ENCODE measurements at regions of chr16 and their contacts with region 1.

Region 1: DNA sequence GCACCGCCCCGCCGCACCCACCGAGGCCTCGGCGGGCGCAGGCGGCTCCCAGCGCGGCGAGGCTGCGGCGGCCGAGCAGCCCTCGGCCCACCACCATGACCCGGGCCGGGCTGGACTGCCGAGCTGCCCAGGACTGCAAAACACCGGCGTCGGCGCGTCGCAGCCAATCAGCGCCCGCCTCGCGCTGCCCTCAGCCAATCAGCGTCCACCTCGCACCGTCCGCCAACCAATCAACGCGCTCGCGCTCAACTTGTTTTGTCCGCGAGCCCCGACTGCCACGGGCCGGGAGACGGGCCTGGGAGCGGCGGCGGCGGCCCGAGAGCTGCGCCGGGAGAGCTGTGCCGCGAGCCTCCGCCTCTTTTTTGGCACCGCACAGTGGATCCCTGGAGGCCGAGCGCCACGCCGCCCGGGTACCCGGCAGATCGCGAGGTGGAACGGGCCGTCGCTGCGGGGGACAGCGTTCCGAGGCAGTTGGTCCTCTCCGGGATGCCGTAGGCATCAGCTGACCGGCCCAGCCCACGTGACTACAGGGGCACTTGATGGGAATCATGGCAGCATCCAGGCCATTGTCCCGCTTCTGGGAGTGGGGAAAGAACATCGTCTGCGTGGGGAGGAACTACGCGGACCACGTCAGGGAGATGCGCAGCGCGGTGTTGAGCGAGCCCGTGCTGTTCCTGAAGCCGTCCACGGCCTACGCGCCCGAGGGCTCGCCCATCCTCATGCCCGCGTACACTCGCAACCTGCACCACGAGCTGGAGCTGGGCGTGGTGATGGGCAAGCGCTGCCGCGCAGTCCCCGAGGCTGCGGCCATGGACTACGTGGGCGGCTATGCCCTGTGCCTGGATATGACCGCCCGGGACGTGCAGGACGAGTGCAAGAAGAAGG is at the starts of genes FAHD1 and HAGH:
- DNase-seq: peak; percentile 93
- ATAC-seq: peak; percentile 90
- H3K4me3 Mint-ChIP-seq: peak within 1 kb of the TSS; percentile 91
- H3K27ac Mint-ChIP-seq: peak within 1 kb of the TSS; percentile 89
- H3K4me1 Mint-ChIP-seq: peaks cover 27% of the 10 kb centered on the region
- H3K27me3 Mint-ChIP-seq: no peaks in the 10 kb centered on the region
- total RNA-seq, gene FAHD1: 11.6 to 11.9 TPM
- total RNA-seq, gene HAGH: 20.9 to 25.0 TPM

Region 2: GRCh38 chr16:1413684-1414531 is 413.0 kb before region 1 on chr16:
- CTCF ChIA-PET with region 1: no interaction called
- POLR2A ChIA-PET with region 1: no interaction called
- intact Hi-C with region 1: loop called in 1 of 2 experiments (anchors 2 kb)
- DNase-seq: peak; percentile 85
- ATAC-seq: peak; percentile 72
- H3K4me3 Mint-ChIP-seq: peak overlapping the region; percentile 81
- H3K27ac Mint-ChIP-seq: peak overlapping the region; percentile 81
- H3K4me1 Mint-ChIP-seq: peaks cover 24% of the 10 kb centered on the region
- H3K27me3 Mint-ChIP-seq: no peaks in the 10 kb centered on the region

Region 3: GRCh38 chr16:1677802-1678496 is 149.0 kb before region 1 on chr16 and contains the start of gene JPT2:
- CTCF ChIA-PET with region 1: no interaction called
- POLR2A ChIA-PET with region 1: no interaction called
- intact Hi-C with region 1: loop called in 1 of 2 experiments (anchors 1 kb)
- DNase-seq: peak; percentile 98
- ATAC-seq: peak; percentile 99
- H3K4me3 Mint-ChIP-seq: peak within 1 kb of the TSS; percentile 94
- H3K27ac Mint-ChIP-seq: peak within 1 kb of the TSS; percentile 89
- H3K4me1 Mint-ChIP-seq: peaks cover 26% of the 10 kb centered on the region
- H3K27me3 Mint-ChIP-seq: no peaks in the 10 kb centered on the region
- total RNA-seq, gene JPT2: 77.1 to 111 TPM

Region 4: GRCh38 chr16:1782352-1783091 is 44.4 kb before region 1 on chr16 and contains the starts of genes NUBP2 and SPSB3:
- CTCF ChIA-PET with region 1: no interaction called
- POLR2A ChIA-PET with region 1: interaction called, 6 read pairs
- intact Hi-C with region 1: loop called (anchors 1 to 5 kb)
- DNase-seq: peak; percentile 99
- ATAC-seq: peak; percentile 93
- H3K4me3 Mint-ChIP-seq: peak within 1 kb of the TSS; percentile 94
- H3K27ac Mint-ChIP-seq: peak within 1 kb of the TSS; percentile 85
- H3K4me1 Mint-ChIP-seq: peaks cover 26% of the 10 kb centered on the region
- H3K27me3 Mint-ChIP-seq: no peaks in the 10 kb centered on the region
- total RNA-seq, gene NUBP2: 34.4 to 42.4 TPM
- total RNA-seq, gene SPSB3: 12.5 to 13.6 TPM

Region 5: DNA sequence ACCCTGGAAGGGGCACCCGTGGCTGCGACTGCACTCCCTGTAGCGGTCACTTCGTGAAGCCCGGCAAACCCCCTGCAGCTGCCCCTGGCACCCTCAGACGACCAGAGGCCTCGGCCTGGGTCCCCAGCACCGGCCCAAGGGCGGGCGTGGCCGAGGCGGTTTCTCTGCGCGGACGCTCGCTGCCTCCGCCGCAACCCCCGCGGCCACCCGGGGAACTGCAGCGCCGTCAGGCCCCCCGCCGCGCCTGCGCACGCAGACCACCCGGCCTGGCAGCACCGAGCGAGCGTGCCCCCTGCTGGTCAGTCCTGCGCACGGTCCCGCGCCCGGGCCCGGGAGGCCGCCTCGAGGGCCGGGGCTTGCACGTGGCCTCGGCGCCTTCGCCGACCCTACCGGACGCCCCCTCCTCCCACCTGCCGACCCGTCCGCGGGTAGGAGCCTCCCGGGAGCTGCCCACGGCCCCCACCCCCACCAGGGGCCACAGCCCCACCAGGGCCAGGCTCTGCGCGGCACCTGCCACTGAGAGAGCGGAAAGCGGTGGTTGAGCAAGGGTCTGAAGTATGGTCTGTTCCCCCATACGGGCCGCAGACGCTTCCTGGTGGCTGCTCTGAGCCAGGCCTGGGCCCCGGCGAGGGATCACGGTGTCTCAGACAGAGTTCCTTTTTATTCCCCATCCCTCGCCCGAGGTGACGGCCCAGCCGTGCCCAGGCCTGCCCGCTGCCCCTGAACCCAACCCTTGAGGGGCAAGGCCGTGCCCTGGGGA is 102.8 kb after region 1 on chr16:
- CTCF ChIA-PET with region 1: no interaction called
- POLR2A ChIA-PET with region 1: no interaction called
- intact Hi-C with region 1: loop called in 1 of 2 experiments (anchors 1 kb)
- DNase-seq: peak; percentile 96
- ATAC-seq: peak; percentile 98
- H3K4me3 Mint-ChIP-seq: peak overlapping the region; percentile 47
- H3K27ac Mint-ChIP-seq: no peak overlapping the region
- H3K4me1 Mint-ChIP-seq: peaks cover 2% of the 10 kb centered on the region
- H3K27me3 Mint-ChIP-seq: peaks cover under 1% of the 10 kb centered on the region

Region 6: DNA sequence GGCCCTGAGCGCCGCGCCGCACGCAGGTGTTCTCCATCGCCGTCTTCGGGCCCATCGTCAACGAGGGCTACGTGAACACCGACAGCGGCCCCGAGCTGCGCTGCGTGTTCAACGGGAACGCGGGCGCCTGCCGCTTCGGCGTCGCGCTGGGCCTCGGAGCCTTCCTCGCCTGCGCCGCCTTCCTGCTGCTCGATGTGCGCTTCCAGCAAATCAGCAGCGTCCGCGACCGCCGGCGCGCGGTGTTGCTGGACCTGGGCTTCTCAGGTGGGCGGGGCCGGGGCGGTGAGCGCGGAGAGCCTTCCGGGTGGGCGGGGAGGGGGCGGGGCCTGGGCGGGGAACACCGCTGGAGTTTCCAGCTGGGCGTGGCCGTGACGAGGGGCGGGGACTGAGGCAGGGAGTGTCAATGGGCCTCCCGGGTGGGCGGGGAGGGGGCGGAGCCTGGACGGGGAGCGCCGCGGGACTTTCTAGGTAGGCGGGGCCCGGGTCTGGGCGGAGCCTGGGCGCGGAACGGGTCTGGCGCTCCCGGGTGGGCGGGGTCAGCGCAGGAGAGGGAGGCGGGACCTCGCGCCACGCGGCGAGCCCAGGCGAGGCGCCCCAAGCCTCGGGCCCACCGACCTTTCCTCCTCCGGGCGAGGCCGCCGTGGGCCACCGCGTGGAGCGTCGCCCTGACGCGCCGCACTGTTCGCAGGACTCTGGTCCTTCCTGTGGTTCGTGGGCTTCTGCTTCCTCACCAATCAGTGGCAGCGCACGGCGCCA is 165.2 kb after region 1 on chr16:
- CTCF ChIA-PET with region 1: no interaction called
- POLR2A ChIA-PET with region 1: no interaction called
- intact Hi-C with region 1: loop called in 1 of 2 experiments (anchors 1 kb)
- DNase-seq: peak; percentile 100
- ATAC-seq: peak; percentile 70
- H3K4me3 Mint-ChIP-seq: peak overlapping the region; percentile 56
- H3K27ac Mint-ChIP-seq: no peak overlapping the region
- H3K4me1 Mint-ChIP-seq: peaks cover 27% of the 10 kb centered on the region
- H3K27me3 Mint-ChIP-seq: peaks cover 15% of the 10 kb centered on the region